Activated CD4-positive, alpha-beta T cell treated with anti-CD3 and anti-CD28 coated beads for 36 hours (primary cell): ENCODE measurements at regions of chr16 and their contacts with region 1.

Region 1: GRCh38 chr16:30534368-30535105 is at the start of gene ZNF747:
- DNase-seq: peak; percentile 95
- ATAC-seq: peak; percentile 80
- H3K4me3 Mint-ChIP-seq: peak within 1 kb of the TSS; percentile 91
- H3K27ac Mint-ChIP-seq: peak within 1 kb of the TSS; percentile 100
- H3K4me1 Mint-ChIP-seq: peaks cover 44% of the 10 kb centered on the region
- H3K27me3 Mint-ChIP-seq: no peaks in the 10 kb centered on the region
- total RNA-seq, gene ZNF747: 6.3 to 8.0 TPM

Region 2: DNA sequence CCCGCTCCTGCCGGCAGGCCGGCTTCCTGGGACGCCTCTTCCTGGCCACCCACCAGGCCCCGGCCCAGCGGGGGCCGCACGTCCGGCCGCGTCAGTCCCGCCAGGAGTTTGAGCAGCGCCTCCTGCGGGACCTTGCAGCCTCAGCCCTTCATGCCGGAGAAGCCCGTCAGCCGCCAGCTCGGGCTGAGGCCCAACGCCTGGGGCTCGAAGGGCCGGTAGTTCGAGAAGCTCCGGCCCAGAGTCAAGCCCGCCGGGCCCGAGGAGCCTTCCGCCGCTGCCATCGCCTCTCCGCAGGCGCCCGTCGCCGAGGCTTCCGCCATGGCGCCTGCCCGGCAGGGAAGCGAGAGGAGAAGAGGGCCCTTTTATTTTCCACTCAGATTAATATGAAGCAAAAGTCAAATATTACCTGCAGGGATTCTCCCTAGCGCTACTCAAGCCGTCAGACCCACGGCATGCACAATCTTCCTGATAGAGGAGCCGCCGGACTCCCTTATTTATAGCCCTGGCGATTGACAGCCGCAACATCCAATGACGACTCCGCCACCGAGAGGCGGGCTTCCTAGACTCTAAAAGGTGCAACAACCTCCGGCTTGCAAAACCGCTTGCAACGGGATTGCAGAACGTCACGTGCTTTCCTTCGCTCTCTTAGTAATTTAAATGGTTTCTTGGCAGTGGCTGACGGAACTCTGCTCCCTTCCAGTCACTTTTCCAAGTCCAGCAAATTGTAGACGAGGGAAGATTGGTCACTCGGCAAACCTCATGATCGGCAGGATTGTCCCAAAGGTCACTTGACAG is 88.9 kb before region 1 on chr16 and contains the start of gene SEPHS2:
- CTCF ChIA-PET with region 1: interaction called, 10 read pairs
- POLR2A ChIA-PET with region 1: no interaction called
- intact Hi-C with region 1: no loop called
- DNase-seq: peak; percentile 98
- ATAC-seq: peak; percentile 98
- H3K4me3 Mint-ChIP-seq: peak within 1 kb of the TSS; percentile 86
- H3K27ac Mint-ChIP-seq: peak within 1 kb of the TSS; percentile 93
- H3K4me1 Mint-ChIP-seq: peaks cover 35% of the 10 kb centered on the region
- H3K27me3 Mint-ChIP-seq: no peaks in the 10 kb centered on the region
- total RNA-seq, gene SEPHS2: 37.8 to 56.0 TPM

Region 3: DNA sequence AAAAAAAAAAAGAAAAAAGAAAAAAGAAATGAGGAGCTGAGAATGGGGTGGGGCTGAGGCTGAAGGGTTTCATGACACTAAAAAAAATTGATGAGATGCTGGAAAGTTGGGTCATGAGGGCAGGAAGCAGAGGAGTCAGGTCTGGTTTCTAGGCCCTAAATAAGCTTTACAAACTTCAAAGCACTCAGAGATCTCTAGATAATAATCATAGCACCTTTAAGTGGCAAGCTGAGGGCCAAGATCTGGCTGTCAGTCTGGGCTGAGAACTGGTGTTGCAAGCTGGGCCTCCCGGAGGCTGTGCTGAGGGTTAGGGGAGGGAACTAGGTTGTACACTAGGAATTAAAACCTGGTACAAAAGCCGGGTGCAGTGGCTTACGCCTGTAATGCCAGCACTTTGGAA is 17.2 kb after region 1 on chr16:
- CTCF ChIA-PET with region 1: interaction called, 22 read pairs
- POLR2A ChIA-PET with region 1: interaction called, 30 read pairs
- intact Hi-C with region 1: loop called in 1 of 2 experiments (anchors 2 kb)
- DNase-seq: peak; percentile 75
- ATAC-seq: peak; percentile 86
- H3K4me3 Mint-ChIP-seq: peak overlapping the region; percentile 59
- H3K27ac Mint-ChIP-seq: peak overlapping the region; percentile 91
- H3K4me1 Mint-ChIP-seq: peaks cover 58% of the 10 kb centered on the region
- H3K27me3 Mint-ChIP-seq: no peaks in the 10 kb centered on the region

Region 4: GRCh38 chr16:30585400-30586189 is 51.1 kb after region 1 on chr16 and contains the start of gene ZNF785:
- CTCF ChIA-PET with region 1: interaction called, 8 read pairs
- POLR2A ChIA-PET with region 1: interaction called, 3 read pairs
- intact Hi-C with region 1: loop called (anchors 1 kb)
- DNase-seq: peak; percentile 96
- ATAC-seq: peak; percentile 99
- H3K4me3 Mint-ChIP-seq: peak within 1 kb of the TSS; percentile 87
- H3K27ac Mint-ChIP-seq: peak within 1 kb of the TSS; percentile 92
- H3K4me1 Mint-ChIP-seq: peaks cover 37% of the 10 kb centered on the region
- H3K27me3 Mint-ChIP-seq: no peaks in the 10 kb centered on the region
- total RNA-seq, gene ZNF785: 9.2 to 10.8 TPM

Region 5: DNA sequence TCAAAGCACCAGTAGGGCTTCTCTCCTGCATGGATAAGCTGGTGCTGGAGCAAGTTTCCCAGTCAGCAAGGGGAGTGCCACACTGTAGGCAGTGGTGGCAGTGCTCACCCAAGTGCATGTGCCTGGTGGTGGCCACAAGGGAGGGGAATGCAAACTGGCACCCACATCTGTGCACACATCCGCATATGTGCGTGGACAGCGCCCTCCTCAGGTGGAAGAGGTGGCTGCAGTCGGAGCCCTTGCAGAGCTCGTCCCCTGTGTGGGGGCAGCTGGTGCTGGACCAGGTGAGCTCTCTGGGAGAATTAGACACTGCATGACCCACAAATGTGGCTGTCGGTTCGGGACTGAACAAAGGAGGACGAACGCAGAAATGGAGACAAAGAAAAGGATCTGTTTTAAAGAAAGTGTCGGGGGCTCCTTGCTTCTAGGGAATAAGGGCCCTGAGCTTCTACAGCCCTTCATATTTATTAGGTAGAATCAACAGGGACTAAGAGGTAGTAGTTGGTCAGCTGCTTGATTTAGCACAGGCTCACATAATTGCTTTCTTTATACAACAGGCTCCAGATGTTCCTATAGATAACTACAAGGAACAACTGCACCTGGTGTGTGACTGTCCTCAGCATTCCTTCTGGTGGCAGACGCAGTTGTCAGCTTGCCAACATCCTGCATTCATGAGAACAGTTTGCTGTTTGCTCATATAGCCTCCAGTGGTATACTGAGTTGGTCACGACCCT is 81.0 kb after region 1 on chr16:
- CTCF ChIA-PET with region 1: interaction called, 12 read pairs
- POLR2A ChIA-PET with region 1: interaction called, 6 read pairs
- intact Hi-C with region 1: loop called in 1 of 2 experiments (anchors 1 kb)
- DNase-seq: peak; percentile 94
- ATAC-seq: peak; percentile 89
- H3K4me3 Mint-ChIP-seq: no peak overlapping the region
- H3K27ac Mint-ChIP-seq: no peak overlapping the region
- H3K4me1 Mint-ChIP-seq: peaks cover 4% of the 10 kb centered on the region
- H3K27me3 Mint-ChIP-seq: no peaks in the 10 kb centered on the region